ENCODE measurements at regions of chr7 and their contacts with region 1.

Region 1: DNA sequence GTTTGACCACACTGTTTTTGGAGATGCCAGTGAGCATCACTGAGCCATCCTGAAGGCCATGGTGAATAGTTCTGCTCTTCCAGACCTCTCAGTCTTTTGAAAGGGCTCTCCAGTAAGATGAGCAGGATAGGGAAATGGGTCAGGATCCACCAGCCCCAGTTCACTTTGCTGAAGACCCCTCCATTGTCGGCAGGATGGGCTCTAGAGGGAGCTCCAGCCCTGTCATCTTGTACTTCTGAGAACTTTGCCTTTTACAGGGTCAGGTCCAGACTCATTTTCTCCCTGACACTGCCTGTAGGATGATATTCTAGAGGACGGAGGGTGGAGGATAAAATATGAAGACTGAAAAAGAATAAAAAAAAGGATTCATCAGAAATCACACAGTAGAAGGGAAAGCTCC is 13.1 kb downstream of the LHFPL3 start:
- DNase-seq: no peak
- H3K4me3 Mint-ChIP-seq: no peak overlapping the region
- H3K27ac Mint-ChIP-seq: no peak overlapping the region
- H3K4me1 Mint-ChIP-seq: no peaks in the 10 kb centered on the region
- H3K27me3 Mint-ChIP-seq: no peaks in the 10 kb centered on the region
- CTCF ChIP-seq: no peak

Region 2: DNA sequence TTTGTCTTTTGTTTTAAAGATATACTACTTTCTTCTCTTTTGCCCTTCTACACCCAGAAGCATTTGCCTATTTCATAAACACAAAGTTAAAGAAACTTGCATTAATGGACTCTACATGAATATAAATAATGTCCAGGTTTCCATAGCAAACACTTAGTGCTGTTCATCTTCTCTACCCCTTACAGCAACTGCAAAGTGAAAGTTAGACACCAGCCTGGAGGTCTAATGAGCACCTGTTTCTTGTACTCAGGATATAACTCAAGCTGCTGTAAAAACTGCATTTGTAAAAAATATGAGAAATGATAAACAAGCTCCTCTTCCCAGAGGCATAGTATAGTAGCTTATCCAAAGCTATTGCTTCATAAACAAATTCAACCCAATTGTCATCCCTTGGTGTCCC is 276.1 kb before region 1 on chr7:
- CTCF ChIA-PET with region 1: no interaction called
- intact Hi-C with region 1: no loop called
- DNase-seq: no peak
- H3K4me3 Mint-ChIP-seq: no peak overlapping the region
- H3K27ac Mint-ChIP-seq: no peak overlapping the region
- H3K4me1 Mint-ChIP-seq: no peaks in the 10 kb centered on the region
- H3K27me3 Mint-ChIP-seq: peaks cover 2% of the 10 kb centered on the region
- CTCF ChIP-seq: no peak

Region 3: DNA sequence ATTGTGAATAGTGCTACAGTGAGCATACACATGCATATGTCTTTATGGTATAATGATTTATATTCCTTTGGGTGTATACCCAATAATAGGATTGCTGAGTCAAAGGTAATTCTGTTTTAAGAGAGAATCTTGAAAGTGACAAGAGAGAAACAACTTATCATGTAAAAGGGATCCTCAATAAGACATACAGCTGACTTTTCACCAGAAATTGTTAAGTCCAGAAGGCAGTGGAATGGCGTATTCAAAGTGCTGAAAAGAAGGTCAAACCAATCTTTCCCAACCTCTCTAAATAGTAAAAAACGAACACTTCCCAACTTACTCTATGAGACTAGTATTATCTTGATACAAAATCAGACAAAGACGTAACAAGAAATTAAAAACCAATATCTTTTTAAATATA is 46.7 kb after region 1 on chr7:
- CTCF ChIA-PET with region 1: no interaction called
- intact Hi-C with region 1: no loop called
- DNase-seq: no peak
- H3K4me3 Mint-ChIP-seq: no peak overlapping the region
- H3K27ac Mint-ChIP-seq: no peak overlapping the region
- H3K4me1 Mint-ChIP-seq: no peaks in the 10 kb centered on the region
- H3K27me3 Mint-ChIP-seq: no peaks in the 10 kb centered on the region
- CTCF ChIP-seq: no peak

Region 4: DNA sequence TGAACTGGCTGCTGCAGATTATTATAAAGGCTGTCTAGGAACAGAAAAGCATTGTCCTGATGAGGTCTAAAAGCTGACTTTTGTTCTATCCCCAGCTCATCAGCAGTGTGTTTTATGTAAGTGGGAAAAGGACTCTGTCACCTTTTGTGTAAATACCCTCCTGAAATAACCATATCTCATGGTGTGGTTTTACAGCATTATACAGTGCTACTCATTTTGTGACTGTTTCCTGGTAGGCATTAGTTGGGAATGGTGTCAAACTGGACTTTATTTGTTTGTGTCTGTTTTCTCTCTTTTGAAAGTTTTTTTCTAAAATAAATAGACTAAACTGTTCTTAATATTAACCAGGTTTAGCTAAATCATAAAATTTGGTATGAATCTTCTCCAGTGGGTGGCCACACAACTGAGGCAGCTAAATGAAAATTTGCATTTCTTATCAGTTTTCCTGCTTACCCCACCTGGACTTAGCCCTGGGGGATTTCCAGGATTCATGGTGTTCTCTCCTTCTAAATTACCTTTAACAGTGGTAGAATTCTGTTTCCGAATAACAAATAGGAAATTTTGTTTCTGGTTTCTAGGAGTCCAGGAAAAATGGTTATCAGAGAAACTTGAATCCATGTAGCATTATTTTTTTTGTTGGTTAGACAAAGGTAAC is 127.7 kb after region 1 on chr7:
- CTCF ChIA-PET with region 1: interaction called, 10 read pairs
- intact Hi-C with region 1: no loop called
- DNase-seq: peak; percentile 2
- H3K4me3 Mint-ChIP-seq: no peak overlapping the region
- H3K27ac Mint-ChIP-seq: no peak overlapping the region
- H3K4me1 Mint-ChIP-seq: no peaks in the 10 kb centered on the region
- H3K27me3 Mint-ChIP-seq: no peaks in the 10 kb centered on the region
- CTCF ChIP-seq: no peak